Lower lobe of right lung (tissue), 2 donors: ENCODE measurements at regions of chr12 and their contacts with region 1.

Region 1: GRCh38 chr12:89389755-89390661 is 37.7 kb upstream of the DUSP6 start:
- DNase-seq: no peak
- ATAC-seq: peak; percentile 85 to 90
- H3K4me3 ChIP-seq: no peak overlapping the region
- H3K27ac ChIP-seq: peak overlapping the region; percentile 66
- H3K4me1 ChIP-seq: peaks cover 67% of the 10 kb centered on the region
- H3K27me3 ChIP-seq: no peaks in the 10 kb centered on the region
- CTCF ChIP-seq: no peak

Region 2: DNA sequence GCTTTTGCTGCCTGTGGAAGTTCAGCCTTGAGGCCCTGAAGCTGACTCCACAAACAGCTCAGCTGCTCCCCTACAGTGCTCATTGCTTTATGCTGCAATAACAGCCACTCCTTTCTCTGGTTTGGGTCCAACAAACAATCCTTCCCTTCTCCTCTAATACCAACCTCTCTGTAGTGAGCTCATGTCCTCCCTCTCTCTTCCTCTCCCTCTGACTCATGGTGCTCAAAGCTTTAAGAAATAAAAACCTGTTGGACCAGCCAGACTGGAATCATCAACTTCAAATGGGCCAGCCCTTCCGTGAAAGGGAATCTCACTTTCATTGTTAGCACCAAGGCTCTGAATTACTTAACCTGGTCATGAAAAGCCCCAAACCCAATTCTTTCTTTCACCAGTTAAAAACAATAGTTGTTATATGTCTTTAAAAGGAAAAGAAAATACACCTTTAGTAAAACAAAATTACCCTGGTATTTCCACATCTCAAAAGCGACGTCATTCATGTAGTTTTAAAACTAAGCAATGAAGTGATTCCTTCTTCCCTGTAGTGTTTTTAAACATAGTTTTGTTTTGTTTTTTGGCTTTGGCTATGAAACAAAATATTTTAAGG is 164.1 kb before region 1 on chr12:
- intact Hi-C with region 1: no loop called
- DNase-seq: no peak
- ATAC-seq: peak; percentile 95 to 96
- H3K4me3 ChIP-seq: no peak overlapping the region
- H3K27ac ChIP-seq: peak overlapping the region; percentile 68
- H3K4me1 ChIP-seq: peaks cover 13% of the 10 kb centered on the region
- H3K27me3 ChIP-seq: no peaks in the 10 kb centered on the region
- CTCF ChIP-seq: no peak

Region 3: DNA sequence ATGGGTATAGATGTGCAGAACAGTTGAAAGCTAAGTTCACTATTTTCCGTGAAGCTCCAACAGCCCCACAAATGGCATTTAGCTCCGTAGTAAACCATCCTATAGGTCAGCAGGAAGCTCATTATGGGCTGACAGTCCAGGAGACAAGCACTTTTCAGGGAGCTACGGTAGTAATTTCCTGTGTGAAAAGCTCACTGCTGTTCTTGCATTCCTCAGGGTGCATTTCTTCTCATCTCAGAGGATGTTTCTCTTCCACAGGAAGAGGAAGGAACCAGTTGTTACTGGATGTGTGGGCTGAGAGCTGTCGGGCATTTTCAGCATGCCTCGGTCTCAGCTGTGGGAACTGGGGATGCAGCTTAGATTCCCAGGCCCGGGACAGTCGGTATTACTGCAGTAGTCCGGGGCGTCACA is 61.8 kb after region 1 on chr12:
- intact Hi-C with region 1: loop called (anchors 10 kb)
- DNase-seq: no peak
- ATAC-seq: peak; percentile 52
- H3K4me3 ChIP-seq: no peak overlapping the region
- H3K27ac ChIP-seq: peak overlapping the region; percentile 83
- H3K4me1 ChIP-seq: peaks cover 40% of the 10 kb centered on the region
- H3K27me3 ChIP-seq: no peaks in the 10 kb centered on the region
- CTCF ChIP-seq: no peak